Caco-2 (cell line): ENCODE measurements at regions of chr7 and their contacts with region 1.

Region 1: GRCh38 chr7:130069978-130070860 is at the start of gene KLHDC10:
- DNase-seq: peak; percentile 98
- H3K4me3 ChIP-seq: peak within 1 kb of the TSS; percentile 75
- H3K4me3 Mint-ChIP-seq: peak within 1 kb of the TSS; percentile 84
- H3K27ac Mint-ChIP-seq: peak within 1 kb of the TSS; percentile 65
- H3K4me1 ChIP-seq: peaks cover 13% of the 10 kb centered on the region
- H3K4me1 Mint-ChIP-seq: peaks cover 20% of the 10 kb centered on the region
- H3K27me3 ChIP-seq: no peaks in the 10 kb centered on the region
- H3K27me3 Mint-ChIP-seq: no peaks in the 10 kb centered on the region
- CTCF ChIP-seq: no peak
- total RNA-seq, gene KLHDC10: 20.3 and 22.3 TPM in 2 replicates

Region 2: DNA sequence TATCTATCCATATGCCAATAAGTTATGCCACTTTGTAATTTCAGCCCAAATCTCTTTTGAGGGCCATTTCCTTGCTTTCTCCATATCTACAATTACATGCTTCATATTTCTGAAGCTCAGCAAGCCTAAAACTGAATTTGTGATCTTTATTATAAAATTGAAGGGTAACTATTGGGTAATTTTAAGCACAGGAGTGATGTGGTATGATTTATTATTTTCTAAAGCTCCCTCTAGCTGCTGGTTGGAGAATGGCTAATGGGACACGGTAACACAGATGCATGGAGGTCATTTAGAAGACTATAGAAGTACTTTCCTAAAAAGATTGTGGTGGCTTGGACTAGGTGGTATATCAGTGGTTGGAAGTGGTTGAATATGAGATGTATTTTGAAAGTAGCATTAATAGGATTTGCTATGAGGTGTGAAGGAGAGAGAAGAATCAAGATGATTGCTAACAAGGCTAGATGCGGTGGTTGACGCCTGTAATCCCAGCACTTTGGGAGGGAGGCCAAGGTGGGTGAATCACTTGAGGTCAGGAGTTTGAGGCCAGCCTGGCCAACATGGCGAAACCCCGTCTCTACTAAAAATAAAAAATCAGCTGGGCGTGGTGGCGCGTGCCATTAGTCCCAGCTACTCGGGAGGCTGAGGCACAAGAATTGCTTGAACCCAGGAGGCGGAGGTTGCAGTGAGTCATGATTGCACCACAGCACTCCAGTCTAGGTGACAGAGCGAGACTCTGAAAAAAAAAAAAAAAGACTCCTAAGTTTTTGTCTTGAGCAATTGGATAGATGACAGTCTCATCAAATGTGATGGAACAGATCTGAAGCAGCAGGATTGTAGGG is 14.0 kb after region 1 on chr7:
- CTCF ChIA-PET with region 1: interaction called, 14 read pairs
- POLR2A ChIA-PET with region 1: interaction called, 3 read pairs
- intact Hi-C with region 1: no loop called
- DNase-seq: no peak
- H3K4me3 ChIP-seq: no peak overlapping the region
- H3K4me3 Mint-ChIP-seq: no peak overlapping the region
- H3K27ac Mint-ChIP-seq: no peak overlapping the region
- H3K4me1 ChIP-seq: no peaks in the 10 kb centered on the region
- H3K4me1 Mint-ChIP-seq: peaks cover 7% of the 10 kb centered on the region
- H3K27me3 ChIP-seq: no peaks in the 10 kb centered on the region
- H3K27me3 Mint-ChIP-seq: no peaks in the 10 kb centered on the region
- CTCF ChIP-seq: peak in 1 of 2 experiments; percentile 62

Region 3: GRCh38 chr7:130154501-130155317 is 84.5 kb after region 1 on chr7:
- CTCF ChIA-PET with region 1: interaction called, 4 read pairs
- POLR2A ChIA-PET with region 1: interaction called, 3 read pairs
- intact Hi-C with region 1: loop called (anchors 2 kb)
- DNase-seq: no peak
- H3K4me3 ChIP-seq: no peak overlapping the region
- H3K4me3 Mint-ChIP-seq: no peak overlapping the region
- H3K27ac Mint-ChIP-seq: no peak overlapping the region
- H3K4me1 ChIP-seq: no peaks in the 10 kb centered on the region
- H3K4me1 Mint-ChIP-seq: no peaks in the 10 kb centered on the region
- H3K27me3 ChIP-seq: no peaks in the 10 kb centered on the region
- H3K27me3 Mint-ChIP-seq: no peaks in the 10 kb centered on the region
- CTCF ChIP-seq: peak in 1 of 2 experiments; percentile 18

Region 4: GRCh38 chr7:130486114-130486958 is 416.1 kb after region 1 on chr7:
- CTCF ChIA-PET with region 1: no interaction called
- POLR2A ChIA-PET with region 1: no interaction called
- intact Hi-C with region 1: loop called (anchors 1 kb)
- DNase-seq: peak; percentile 96 to 98
- H3K4me3 ChIP-seq: peak overlapping the region; percentile 98
- H3K4me3 Mint-ChIP-seq: peak overlapping the region; percentile 97
- H3K27ac Mint-ChIP-seq: peak overlapping the region; percentile 96
- H3K4me1 ChIP-seq: peaks cover 40% of the 10 kb centered on the region
- H3K4me1 Mint-ChIP-seq: peaks cover 45% of the 10 kb centered on the region
- H3K27me3 ChIP-seq: no peaks in the 10 kb centered on the region
- H3K27me3 Mint-ChIP-seq: no peaks in the 10 kb centered on the region
- CTCF ChIP-seq: peak; percentile 91 to 92

Region 5: GRCh38 chr7:130721486-130722280 is 651.5 kb after region 1 on chr7:
- CTCF ChIA-PET with region 1: interaction called, 4 read pairs
- POLR2A ChIA-PET with region 1: no interaction called
- intact Hi-C with region 1: loop called (anchors 2 kb)
- DNase-seq: peak; percentile 77 to 79
- H3K4me3 ChIP-seq: no peak overlapping the region
- H3K4me3 Mint-ChIP-seq: no peak overlapping the region
- H3K27ac Mint-ChIP-seq: no peak overlapping the region
- H3K4me1 ChIP-seq: no peaks in the 10 kb centered on the region
- H3K4me1 Mint-ChIP-seq: no peaks in the 10 kb centered on the region
- H3K27me3 ChIP-seq: no peaks in the 10 kb centered on the region; the same call in 1 of the 2 replicates
- H3K27me3 Mint-ChIP-seq: no peaks in the 10 kb centered on the region
- CTCF ChIP-seq: peak; percentile 67 to 81

Region 6: GRCh38 chr7:130831817-130832481 is 761.7 kb after region 1 on chr7:
- CTCF ChIA-PET with region 1: no interaction called
- POLR2A ChIA-PET with region 1: no interaction called
- intact Hi-C with region 1: loop called (anchors 5 kb)
- DNase-seq: peak in 1 of 2 experiments; percentile 29
- H3K4me3 ChIP-seq: no peak overlapping the region
- H3K4me3 Mint-ChIP-seq: no peak overlapping the region
- H3K27ac Mint-ChIP-seq: no peak overlapping the region
- H3K4me1 ChIP-seq: no peaks in the 10 kb centered on the region
- H3K4me1 Mint-ChIP-seq: no peaks in the 10 kb centered on the region
- H3K27me3 ChIP-seq: no peaks in the 10 kb centered on the region; the same call in 1 of the 2 replicates
- H3K27me3 Mint-ChIP-seq: peaks cover 8% of the 10 kb centered on the region
- CTCF ChIP-seq: peak; percentile 68 to 72